ENCODE measurements at regions of chr12 and their contacts with region 1.

Region 1: GRCh38 chr12:95072900-95073697 is at the start of gene NR2C1:
- DNase-seq: peak; percentile 68 to 95
- H3K4me3 ChIP-seq: peak within 1 kb of the TSS; percentile 82 to 98
- H3K27ac ChIP-seq: peak within 1 kb of the TSS; percentile 85 to 86
- H3K4me1 ChIP-seq: peaks cover 0 to 11% of the 10 kb centered on the region in 2 donors
- H3K27me3 ChIP-seq: no peaks in the 10 kb centered on the region
- CTCF ChIP-seq: no peak
- total RNA-seq, gene NR2C1: 42.3 TPM

Region 2: GRCh38 chr12:95003213-95003920 is 69.7 kb before region 1 on chr12 and contains the start of gene NDUFA12:
- intact Hi-C with region 1: loop called (anchors 2 kb)
- DNase-seq: peak; percentile 86 to 96
- H3K4me3 ChIP-seq: peak within 1 kb of the TSS; percentile 63 to 89
- H3K27ac ChIP-seq: peak within 1 kb of the TSS; percentile 75 to 82
- H3K4me1 ChIP-seq: peaks cover 4% of the 10 kb centered on the region in 2 donors
- H3K27me3 ChIP-seq: no peaks in the 10 kb centered on the region
- CTCF ChIP-seq: no peak
- total RNA-seq, gene NDUFA12: 15.1 TPM

Region 3: DNA sequence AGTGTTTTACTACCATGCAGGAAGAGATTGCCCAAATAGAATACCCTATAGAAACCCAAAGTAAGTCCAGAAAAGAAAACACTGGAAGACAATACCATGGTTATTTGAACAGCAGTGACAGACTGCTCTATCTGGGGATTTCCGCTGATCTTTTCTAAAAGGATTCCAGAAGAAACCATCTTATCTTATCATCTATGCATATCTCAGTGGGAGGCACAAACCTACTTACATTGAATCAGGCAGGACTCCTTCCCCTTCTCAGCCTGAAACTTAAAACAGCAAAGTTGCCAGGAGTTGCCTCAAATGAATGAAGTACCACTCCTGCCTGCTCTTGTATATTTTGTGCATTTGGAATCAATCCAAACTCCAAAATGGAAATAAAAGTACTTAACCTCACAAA is 57.0 kb after region 1 on chr12:
- intact Hi-C with region 1: no loop called
- DNase-seq: no peak
- H3K4me3 ChIP-seq: no peak overlapping the region
- H3K27ac ChIP-seq: no peak overlapping the region
- H3K4me1 ChIP-seq: peaks cover 0 to 2% of the 10 kb centered on the region in 2 donors
- H3K27me3 ChIP-seq: no peaks in the 10 kb centered on the region
- CTCF ChIP-seq: no peak

Region 4: DNA sequence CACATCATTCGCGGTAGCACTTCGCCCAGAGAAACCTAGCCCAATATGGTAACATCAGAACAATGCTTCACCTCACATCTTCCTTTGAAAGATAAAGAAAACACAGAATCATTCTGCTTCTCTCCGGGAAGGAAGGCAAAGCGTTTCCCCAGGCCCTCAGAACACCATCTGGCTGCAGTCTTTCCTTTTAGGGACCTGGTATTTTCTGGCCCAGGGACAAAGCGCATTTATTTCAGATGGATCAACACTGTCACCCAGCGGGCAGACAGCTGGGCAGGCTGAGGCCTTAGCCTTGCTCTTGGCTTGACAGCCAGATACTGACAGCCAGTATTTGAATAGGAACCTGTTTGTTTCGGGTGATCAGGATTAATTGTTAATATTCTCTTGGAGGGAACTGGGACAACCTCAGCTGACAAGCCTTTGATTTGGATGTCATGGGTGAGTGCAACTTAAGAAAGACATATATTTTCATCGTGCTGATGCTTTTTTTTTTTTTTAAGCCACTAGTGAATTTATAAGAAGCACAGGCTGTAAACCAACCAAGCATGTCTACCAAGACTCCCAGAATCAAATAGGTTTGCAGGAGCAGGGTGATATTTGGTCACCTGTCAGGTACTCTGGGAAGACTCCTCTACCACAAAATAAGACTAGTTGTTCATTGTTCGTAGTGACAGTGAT is 263.4 kb after region 1 on chr12:
- intact Hi-C with region 1: loop called (anchors 2 kb)
- DNase-seq: peak in 1 of 2 donors; percentile 82
- H3K4me3 ChIP-seq: peak overlapping the region in 1 of 2 donors; percentile 5
- H3K27ac ChIP-seq: peak overlapping the region; percentile 59 to 78
- H3K4me1 ChIP-seq: peaks cover 0 to 5% of the 10 kb centered on the region in 2 donors
- H3K27me3 ChIP-seq: no peaks in the 10 kb centered on the region
- CTCF ChIP-seq: peak; percentile 78 to 97 (median 85)

Region 5: DNA sequence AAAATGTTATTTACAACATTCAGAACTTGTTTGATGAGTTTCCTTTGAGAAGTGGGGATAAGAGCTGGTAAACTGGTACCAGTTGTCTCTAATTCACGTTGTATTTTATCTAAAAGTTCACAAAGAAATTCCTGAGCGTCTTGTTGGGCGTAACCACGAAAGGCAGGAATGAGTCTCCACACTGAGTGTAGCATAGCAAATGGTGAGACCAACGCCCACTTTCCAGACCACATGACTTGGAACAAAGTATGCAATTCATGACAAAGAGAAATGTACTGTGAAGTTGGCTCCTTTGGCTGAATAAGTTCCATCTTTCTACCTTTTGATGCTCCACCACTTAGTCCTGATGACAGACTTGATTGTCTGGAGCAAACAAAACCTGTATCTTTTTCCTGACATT is 459.8 kb after region 1 on chr12:
- intact Hi-C with region 1: loop called (anchors 10 kb)
- DNase-seq: no peak
- H3K4me3 ChIP-seq: no peak overlapping the region
- H3K27ac ChIP-seq: no peak overlapping the region
- H3K4me1 ChIP-seq: no peaks in the 10 kb centered on the region
- H3K27me3 ChIP-seq: no peaks in the 10 kb centered on the region
- CTCF ChIP-seq: no peak

Measured in ascending aorta (tissue), 2 donors.